ENCODE measurements at regions of chr1 and their contacts with region 1.

Region 1: GRCh38 chr1:158329733-158330132 is 1.6 kb downstream of the CD1B start:
- DNase-seq: peak; percentile 50
- ATAC-seq: no peak
- H3K4me3 Mint-ChIP-seq: no peak overlapping the region
- H3K27ac Mint-ChIP-seq: no peak overlapping the region
- H3K4me1 Mint-ChIP-seq: peaks cover 14% of the 10 kb centered on the region
- H3K27me3 Mint-ChIP-seq: peaks cover 2% of the 10 kb centered on the region

Region 2: DNA sequence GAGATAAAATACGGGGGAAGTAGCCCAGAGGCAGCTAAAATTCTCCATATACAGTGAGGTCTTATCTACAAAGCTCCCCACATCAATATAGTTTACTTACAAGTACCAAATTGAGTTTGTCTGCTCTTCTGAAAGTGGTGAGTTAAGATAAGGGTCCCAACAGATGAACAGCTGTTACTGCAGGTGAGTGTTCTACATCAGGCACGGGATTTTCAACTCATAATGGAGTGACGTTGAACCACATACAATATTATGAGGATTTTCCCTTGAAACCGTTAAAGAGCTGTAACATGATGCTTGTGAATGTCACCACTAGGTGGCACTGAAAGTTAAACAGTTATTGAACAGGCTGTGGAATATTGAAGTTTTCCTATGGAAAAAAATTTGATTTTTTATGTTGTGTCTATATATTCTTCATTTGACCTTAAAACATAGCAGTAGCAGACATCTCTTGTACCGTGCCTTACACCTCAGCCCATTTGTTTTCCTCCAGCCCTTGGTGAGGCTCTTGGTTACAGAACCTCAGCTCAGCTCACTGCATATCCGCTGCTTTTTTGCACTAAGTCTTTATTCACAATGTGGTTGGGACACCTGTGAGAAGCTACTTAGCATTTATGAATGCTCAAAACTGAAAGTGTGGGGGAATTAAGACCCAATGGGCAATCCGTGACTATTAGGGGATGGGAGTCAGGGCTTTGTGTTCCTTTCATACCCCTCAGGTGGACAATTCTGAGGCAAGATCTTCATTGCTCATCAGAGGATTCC is 125.9 kb before region 1 on chr1:
- CTCF ChIA-PET with region 1: interaction called, 13 read pairs
- POLR2A ChIA-PET with region 1: no interaction called
- intact Hi-C with region 1: loop called (anchors 1 to 2 kb)
- DNase-seq: peak; percentile 20
- ATAC-seq: peak; percentile 87
- H3K4me3 Mint-ChIP-seq: no peak overlapping the region
- H3K27ac Mint-ChIP-seq: no peak overlapping the region
- H3K4me1 Mint-ChIP-seq: peaks cover 9% of the 10 kb centered on the region
- H3K27me3 Mint-ChIP-seq: peaks cover 22% of the 10 kb centered on the region

Region 3: DNA sequence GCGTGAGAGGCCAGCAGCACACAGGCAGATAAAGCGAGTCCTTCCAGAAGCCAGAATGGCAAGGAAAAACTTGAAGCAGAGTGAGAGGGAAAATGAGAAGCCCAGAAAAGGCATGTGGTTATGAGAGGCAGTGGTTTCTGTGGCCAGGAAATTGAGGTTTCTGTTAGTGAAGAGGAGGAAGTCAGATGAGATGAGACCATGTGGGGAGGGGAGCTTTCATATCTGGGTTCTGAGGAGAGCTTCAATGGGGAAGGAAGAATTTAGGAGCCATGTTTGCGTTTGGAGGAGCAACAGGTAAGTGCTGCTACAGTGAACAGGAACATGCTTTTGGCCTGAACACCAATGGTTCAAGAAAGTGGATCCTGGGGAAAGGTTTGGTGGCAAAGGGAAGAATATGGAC is 81.6 kb before region 1 on chr1:
- CTCF ChIA-PET with region 1: no interaction called
- POLR2A ChIA-PET with region 1: no interaction called
- intact Hi-C with region 1: loop called (anchors 2 to 5 kb)
- DNase-seq: peak; percentile 52
- ATAC-seq: no peak
- H3K4me3 Mint-ChIP-seq: no peak overlapping the region
- H3K27ac Mint-ChIP-seq: no peak overlapping the region
- H3K4me1 Mint-ChIP-seq: peaks cover 21% of the 10 kb centered on the region
- H3K27me3 Mint-ChIP-seq: peaks cover 30% of the 10 kb centered on the region